Activated B cell treated with CpG ODN at 0.5 μM for 24 hours (primary cell): ENCODE measurements at regions of chr17 and their contacts with region 1.

Region 1: DNA sequence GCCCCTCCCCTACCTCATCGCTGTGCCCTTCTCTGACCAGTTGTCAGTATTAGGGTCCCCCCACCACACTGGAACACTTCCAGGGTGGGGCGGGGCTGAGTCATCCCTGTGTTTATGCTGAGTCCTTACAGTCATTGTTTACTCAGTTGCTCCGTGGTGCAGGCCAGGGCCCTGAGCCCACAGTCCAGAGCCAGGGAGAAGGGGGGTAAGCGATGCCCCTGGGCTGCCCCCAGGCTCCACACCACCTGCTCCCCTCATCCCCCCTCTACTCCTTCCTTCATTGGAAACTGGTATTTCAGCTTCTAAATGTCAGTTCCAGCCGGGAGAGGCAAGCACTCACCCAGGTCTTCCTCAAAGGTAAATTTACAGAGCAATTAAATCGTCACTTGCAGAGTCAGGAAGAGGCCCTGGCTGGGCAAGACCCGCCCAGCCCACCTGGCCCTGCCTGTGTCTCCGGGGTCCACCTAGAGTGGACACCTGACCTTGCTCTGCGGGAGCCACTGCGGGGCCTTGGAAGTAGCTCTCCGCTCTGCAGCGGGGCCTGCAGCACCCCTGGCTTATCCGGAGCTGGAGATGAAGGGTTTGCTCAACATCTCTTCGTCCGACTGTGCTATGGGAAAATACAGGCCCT is 4.8 kb downstream of the ATP2A3 start:
- DNase-seq: no peak
- ATAC-seq: no peak
- H3K4me3 Mint-ChIP-seq: peak overlapping the region; percentile 89
- H3K27ac Mint-ChIP-seq: peak overlapping the region; percentile 88
- H3K4me1 Mint-ChIP-seq: peaks cover 78% of the 10 kb centered on the region
- H3K27me3 Mint-ChIP-seq: no peaks in the 10 kb centered on the region
- CTCF ChIP-seq: no peak

Region 2: DNA sequence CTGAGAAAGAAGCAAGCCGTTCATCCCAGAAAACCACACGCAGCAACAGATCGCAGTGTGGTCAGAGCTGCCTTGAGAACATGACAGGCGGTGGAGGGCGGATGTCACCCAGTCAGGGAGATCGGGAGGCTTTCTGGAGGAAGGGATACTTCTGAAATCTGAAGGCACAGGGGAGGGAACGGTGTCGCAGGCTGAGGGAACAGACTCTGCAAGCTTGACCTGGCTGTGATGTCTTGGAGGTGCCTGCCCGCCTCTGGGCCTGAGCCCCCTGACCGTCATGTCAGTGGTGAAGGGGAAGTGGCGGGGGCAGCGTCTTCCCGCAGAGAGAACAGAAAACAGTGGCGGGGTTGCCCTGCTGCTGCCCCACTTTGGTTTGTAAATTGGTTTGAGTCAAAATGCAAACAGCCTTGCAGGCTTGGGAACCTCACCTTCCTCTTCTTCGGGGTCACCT is 12.9 kb after region 1 on chr17:
- CTCF ChIA-PET with region 1: no interaction called
- POLR2A ChIA-PET with region 1: interaction called, 41 read pairs
- intact Hi-C with region 1: loop called (anchors 1 kb)
- DNase-seq: peak; percentile 52
- ATAC-seq: peak; percentile 70
- H3K4me3 Mint-ChIP-seq: peak overlapping the region; percentile 68
- H3K27ac Mint-ChIP-seq: peak overlapping the region; percentile 71
- H3K4me1 Mint-ChIP-seq: peaks cover 59% of the 10 kb centered on the region
- H3K27me3 Mint-ChIP-seq: no peaks in the 10 kb centered on the region
- CTCF ChIP-seq: no peak

Region 3: GRCh38 chr17:4004517-4005295 is 45.3 kb after region 1 on chr17:
- CTCF ChIA-PET with region 1: interaction called, 9 read pairs
- POLR2A ChIA-PET with region 1: interaction called, 17 read pairs
- intact Hi-C with region 1: no loop called
- DNase-seq: peak; percentile 77
- ATAC-seq: peak; percentile 80
- H3K4me3 Mint-ChIP-seq: peak overlapping the region; percentile 38
- H3K27ac Mint-ChIP-seq: no peak overlapping the region
- H3K4me1 Mint-ChIP-seq: peaks cover 24% of the 10 kb centered on the region
- H3K27me3 Mint-ChIP-seq: no peaks in the 10 kb centered on the region
- CTCF ChIP-seq: peak; percentile 96